ENCODE measurements at regions of chr6 and their contacts with region 1.

Region 1: GRCh38 chr6:14035448-14035847 is 82.1 kb upstream of the CD83 start:
- DNase-seq: no peak
- H3K4me3 Mint-ChIP-seq: no peak overlapping the region
- H3K27ac Mint-ChIP-seq: no peak overlapping the region
- H3K4me1 Mint-ChIP-seq: peaks cover 7% of the 10 kb centered on the region
- H3K27me3 Mint-ChIP-seq: peaks cover 23% of the 10 kb centered on the region

Region 2: GRCh38 chr6:14066782-14067406 is 31.4 kb after region 1 on chr6:
- CTCF ChIA-PET with region 1: interaction called, 10 read pairs
- POLR2A ChIA-PET with region 1: no interaction called
- DNase-seq: peak; percentile 21
- H3K4me3 Mint-ChIP-seq: no peak overlapping the region
- H3K27ac Mint-ChIP-seq: no peak overlapping the region
- H3K4me1 Mint-ChIP-seq: peaks cover 10% of the 10 kb centered on the region
- H3K27me3 Mint-ChIP-seq: peaks cover 20% of the 10 kb centered on the region

Measured in activated CD4-positive, alpha-beta T cell treated with anti-CD3 and anti-CD28 coated beads, Interleukin-2, amount 10 ng/mL, durations not matched to agents 7 days and 5 days (primary cell).